Activated T-helper 1 cell treated with anti-CD3 and anti-CD28 coated beads, Interleukin-12 subunit alpha, Interleukin-12 subunit beta, Interleukin-2, Interleukin-4 antibody, amounts not matched to agents 30 ng/mL and 10 ng/mL and 1 ng/mL, durations not matched to agents 14 hours and 24 hours and 36 hours (primary cell): ENCODE measurements at regions of chr5 and their contacts with region 1.

Region 1: GRCh38 chr5:75053304-75054133 is 1.2 kb upstream of the GCNT4 start:
- DNase-seq: peak; percentile 43
- H3K4me3 Mint-ChIP-seq: peak overlapping the region; percentile 86
- H3K27ac Mint-ChIP-seq: peak overlapping the region; percentile 75
- H3K4me1 Mint-ChIP-seq: peaks cover 58% of the 10 kb centered on the region
- H3K27me3 Mint-ChIP-seq: peaks cover 19% of the 10 kb centered on the region

Region 2: GRCh38 chr5:74576941-74577456 is 476.5 kb before region 1 on chr5:
- intact Hi-C with region 1: loop called (anchors 5 kb)
- DNase-seq: peak; percentile 12
- H3K4me3 Mint-ChIP-seq: peak overlapping the region; percentile 21
- H3K27ac Mint-ChIP-seq: peak overlapping the region; percentile 53
- H3K4me1 Mint-ChIP-seq: peaks cover 34% of the 10 kb centered on the region
- H3K27me3 Mint-ChIP-seq: peaks cover 12% of the 10 kb centered on the region

Region 3: GRCh38 chr5:74865804-74866595 is 187.5 kb before region 1 on chr5 and contains the start of gene FAM169A:
- intact Hi-C with region 1: loop called (anchors 5 kb)
- DNase-seq: peak; percentile 19
- H3K4me3 Mint-ChIP-seq: peak within 1 kb of the TSS; percentile 88
- H3K27ac Mint-ChIP-seq: peak within 1 kb of the TSS; percentile 76
- H3K4me1 Mint-ChIP-seq: peaks cover 11% of the 10 kb centered on the region
- H3K27me3 Mint-ChIP-seq: peaks cover 25% of the 10 kb centered on the region
- total RNA-seq, gene FAM169A: 3.2 and 3.5 TPM in 2 replicates

Region 4: GRCh38 chr5:75089137-75089536 is 35.6 kb after region 1 on chr5:
- intact Hi-C with region 1: loop called (anchors 5 kb)
- DNase-seq: no peak
- H3K4me3 Mint-ChIP-seq: no peak overlapping the region
- H3K27ac Mint-ChIP-seq: no peak overlapping the region
- H3K4me1 Mint-ChIP-seq: peaks cover 12% of the 10 kb centered on the region
- H3K27me3 Mint-ChIP-seq: peaks cover 2% of the 10 kb centered on the region

Region 5: DNA sequence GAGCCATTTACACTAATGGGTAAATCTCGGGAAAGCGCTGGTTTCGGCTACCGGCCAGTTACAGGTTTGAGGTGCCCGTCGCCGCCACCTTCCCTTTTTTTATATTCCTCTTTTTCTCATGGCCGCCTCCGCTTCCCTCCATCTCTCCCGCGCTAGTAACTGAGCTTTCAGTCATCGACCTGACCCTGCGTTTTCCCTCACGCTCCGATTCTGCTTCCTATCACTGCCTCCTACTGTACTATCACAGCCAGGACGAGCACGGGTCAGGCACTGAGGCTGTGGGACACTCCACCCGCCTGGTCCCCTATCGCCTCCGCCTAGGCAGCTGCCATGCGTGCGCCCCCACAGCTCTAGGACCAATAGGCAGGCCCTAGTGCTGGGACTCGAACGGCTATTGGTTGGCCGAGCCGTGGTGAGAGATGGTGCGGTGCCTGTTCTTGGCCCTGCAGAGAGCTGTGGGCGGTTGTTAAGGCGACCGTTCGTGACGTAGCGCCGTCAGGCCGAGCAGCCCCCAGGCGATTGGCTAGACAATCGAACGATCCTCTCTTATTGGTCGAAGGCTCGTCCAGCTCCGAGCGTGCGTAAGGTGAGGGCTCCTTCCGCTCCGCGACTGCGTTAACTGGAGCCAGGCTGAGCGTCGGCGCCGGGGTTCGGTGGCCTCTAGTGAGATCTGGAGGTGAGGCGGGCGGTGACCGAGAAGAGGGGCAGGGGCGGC is 283.3 kb after region 1 on chr5 and contains the start of gene HMGCR:
- intact Hi-C with region 1: loop called (anchors 1 kb)
- DNase-seq: peak; percentile 96
- H3K4me3 Mint-ChIP-seq: no peak within 1 kb of the TSS
- H3K27ac Mint-ChIP-seq: no peak within 1 kb of the TSS
- H3K4me1 Mint-ChIP-seq: peaks cover 40% of the 10 kb centered on the region
- H3K27me3 Mint-ChIP-seq: no peaks in the 10 kb centered on the region
- total RNA-seq, gene HMGCR: 95.7 and 113 TPM in 2 replicates

Region 6: DNA sequence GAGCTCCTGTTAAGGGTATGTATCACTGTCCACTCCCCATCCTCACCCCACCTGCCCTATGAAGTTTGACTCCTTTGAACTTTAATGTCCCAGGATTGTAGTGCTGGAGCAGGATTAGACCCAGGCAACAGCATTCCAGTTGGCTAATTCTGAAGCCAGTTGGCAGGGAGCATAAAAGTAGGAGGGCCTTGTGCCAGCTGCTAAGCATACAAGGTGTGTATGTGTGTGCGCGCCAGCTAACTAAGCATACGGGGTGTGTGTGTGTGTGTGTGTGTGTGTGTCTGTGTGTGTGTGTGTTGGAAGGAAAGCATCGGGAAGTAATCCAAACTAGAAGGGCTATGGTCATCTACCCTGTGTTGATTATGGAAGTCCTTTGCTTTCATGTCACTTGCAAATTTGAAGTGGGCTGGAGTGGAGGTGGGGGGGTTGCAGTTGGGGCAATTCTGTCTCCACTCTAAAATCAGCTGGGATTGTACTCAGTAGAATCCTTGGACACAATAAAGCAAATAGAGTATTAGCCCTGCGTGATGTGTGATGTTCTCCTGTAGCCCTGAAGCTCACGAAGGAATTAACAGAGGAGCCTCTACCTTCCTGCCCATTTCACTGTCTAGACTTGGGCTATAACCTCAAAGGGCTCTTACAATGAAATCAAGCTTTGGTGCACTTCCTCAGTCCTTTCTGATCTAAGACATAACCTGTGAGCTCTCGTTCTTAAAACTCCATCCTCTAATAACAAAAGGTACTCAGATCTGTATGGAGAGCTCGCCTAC is 310.4 kb after region 1 on chr5:
- intact Hi-C with region 1: no loop called
- DNase-seq: no peak
- H3K4me3 Mint-ChIP-seq: no peak overlapping the region
- H3K27ac Mint-ChIP-seq: peak overlapping the region; percentile 38
- H3K4me1 Mint-ChIP-seq: no peaks in the 10 kb centered on the region
- H3K27me3 Mint-ChIP-seq: peaks cover 1% of the 10 kb centered on the region

Region 7: GRCh38 chr5:75668977-75669689 is 615.6 kb after region 1 on chr5:
- intact Hi-C with region 1: loop called (anchors 5 kb)
- DNase-seq: peak; percentile 37
- H3K4me3 Mint-ChIP-seq: peak overlapping the region; percentile 79
- H3K27ac Mint-ChIP-seq: peak overlapping the region; percentile 91
- H3K4me1 Mint-ChIP-seq: peaks cover 36% of the 10 kb centered on the region
- H3K27me3 Mint-ChIP-seq: peaks cover 3% of the 10 kb centered on the region

Region 8: GRCh38 chr5:76256116-76256889 is 1202.8 kb after region 1 on chr5:
- intact Hi-C with region 1: loop called (anchors 2 kb)
- DNase-seq: peak; percentile 55
- H3K4me3 Mint-ChIP-seq: no peak overlapping the region
- H3K27ac Mint-ChIP-seq: no peak overlapping the region
- H3K4me1 Mint-ChIP-seq: no peaks in the 10 kb centered on the region
- H3K27me3 Mint-ChIP-seq: peaks cover 22% of the 10 kb centered on the region